ENCODE measurements at regions of chr6 and their contacts with region 1.

Region 1: GRCh38 chr6:4155848-4156466 is 20.6 kb upstream of the ECI2 start:
- DNase-seq: peak; percentile 80
- H3K4me3 ChIP-seq: no peak overlapping the region
- H3K27ac ChIP-seq: no peak overlapping the region
- H3K4me1 ChIP-seq: peaks cover 31% of the 10 kb centered on the region
- CTCF ChIP-seq: peak; percentile 95

Region 2: DNA sequence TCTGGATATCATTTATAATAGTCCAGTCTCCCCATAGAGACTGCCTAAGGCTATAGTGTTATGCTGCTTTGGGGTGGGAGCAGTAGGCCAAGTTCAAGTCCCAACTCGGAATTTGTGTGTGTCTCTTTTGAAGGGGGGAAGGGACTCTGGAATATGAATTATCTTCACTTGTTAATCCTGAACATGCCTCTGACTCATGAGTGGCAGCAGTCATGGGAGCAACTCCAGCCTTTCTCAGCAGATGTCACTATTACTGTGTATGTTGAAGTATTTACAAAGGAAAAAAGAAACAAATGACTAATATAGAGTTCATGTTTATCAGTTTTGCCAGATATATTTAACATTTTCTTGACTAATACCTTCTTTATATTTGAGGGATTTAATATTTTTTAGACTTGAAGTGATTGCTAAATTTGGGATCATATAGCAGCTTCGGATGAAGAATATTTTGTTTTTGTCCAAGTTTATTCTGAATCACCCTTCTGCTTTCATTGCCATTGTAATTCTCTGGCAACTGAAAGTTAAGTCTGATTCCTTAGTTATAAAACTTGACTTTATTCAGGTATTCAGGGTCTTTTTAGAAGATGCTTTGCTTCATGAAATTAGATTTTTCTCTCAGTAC is 100.4 kb before region 1 on chr6:
- CTCF ChIA-PET with region 1: no interaction called
- POLR2A ChIA-PET with region 1: no interaction called
- intact Hi-C with region 1: loop called (anchors 5 kb)
- DNase-seq: peak; percentile 7
- H3K4me3 ChIP-seq: no peak overlapping the region
- H3K27ac ChIP-seq: no peak overlapping the region
- H3K4me1 ChIP-seq: no peaks in the 10 kb centered on the region
- CTCF ChIP-seq: peak; percentile 57

Region 3: GRCh38 chr6:4169028-4169789 is 13.3 kb after region 1 on chr6:
- CTCF ChIA-PET with region 1: no interaction called
- POLR2A ChIA-PET with region 1: no interaction called
- intact Hi-C with region 1: no loop called
- DNase-seq: no peak
- H3K4me3 ChIP-seq: no peak overlapping the region
- H3K27ac ChIP-seq: no peak overlapping the region
- H3K4me1 ChIP-seq: no peaks in the 10 kb centered on the region
- CTCF ChIP-seq: no peak

Region 4: DNA sequence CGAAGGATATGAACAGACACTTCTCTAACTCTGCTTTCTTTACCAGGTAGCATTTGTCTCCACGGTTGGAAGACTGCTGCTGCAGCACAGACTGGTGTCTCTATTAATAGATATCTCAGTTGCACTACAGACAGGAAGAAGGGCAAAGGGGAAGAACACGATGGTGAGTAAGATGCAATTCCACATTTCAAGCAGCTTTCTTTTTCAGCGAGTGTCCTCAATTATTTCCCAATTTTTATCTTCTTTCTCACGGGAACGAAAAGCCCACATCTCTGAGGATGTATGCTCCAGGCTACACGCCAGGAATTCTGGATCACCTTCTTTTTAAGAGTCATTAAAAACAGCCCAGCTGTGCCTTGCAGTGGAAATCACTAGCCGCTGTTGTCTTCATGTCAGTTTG is 291.0 kb after region 1 on chr6:
- CTCF ChIA-PET with region 1: no interaction called
- POLR2A ChIA-PET with region 1: no interaction called
- intact Hi-C with region 1: no loop called
- DNase-seq: peak; percentile 72
- H3K4me3 ChIP-seq: peak overlapping the region; percentile 20
- H3K27ac ChIP-seq: no peak overlapping the region
- H3K4me1 ChIP-seq: peaks cover 15% of the 10 kb centered on the region
- CTCF ChIP-seq: no peak